MCF 10A (cell line): ENCODE measurements at regions of chr1 and their contacts with region 1.

Region 1: DNA sequence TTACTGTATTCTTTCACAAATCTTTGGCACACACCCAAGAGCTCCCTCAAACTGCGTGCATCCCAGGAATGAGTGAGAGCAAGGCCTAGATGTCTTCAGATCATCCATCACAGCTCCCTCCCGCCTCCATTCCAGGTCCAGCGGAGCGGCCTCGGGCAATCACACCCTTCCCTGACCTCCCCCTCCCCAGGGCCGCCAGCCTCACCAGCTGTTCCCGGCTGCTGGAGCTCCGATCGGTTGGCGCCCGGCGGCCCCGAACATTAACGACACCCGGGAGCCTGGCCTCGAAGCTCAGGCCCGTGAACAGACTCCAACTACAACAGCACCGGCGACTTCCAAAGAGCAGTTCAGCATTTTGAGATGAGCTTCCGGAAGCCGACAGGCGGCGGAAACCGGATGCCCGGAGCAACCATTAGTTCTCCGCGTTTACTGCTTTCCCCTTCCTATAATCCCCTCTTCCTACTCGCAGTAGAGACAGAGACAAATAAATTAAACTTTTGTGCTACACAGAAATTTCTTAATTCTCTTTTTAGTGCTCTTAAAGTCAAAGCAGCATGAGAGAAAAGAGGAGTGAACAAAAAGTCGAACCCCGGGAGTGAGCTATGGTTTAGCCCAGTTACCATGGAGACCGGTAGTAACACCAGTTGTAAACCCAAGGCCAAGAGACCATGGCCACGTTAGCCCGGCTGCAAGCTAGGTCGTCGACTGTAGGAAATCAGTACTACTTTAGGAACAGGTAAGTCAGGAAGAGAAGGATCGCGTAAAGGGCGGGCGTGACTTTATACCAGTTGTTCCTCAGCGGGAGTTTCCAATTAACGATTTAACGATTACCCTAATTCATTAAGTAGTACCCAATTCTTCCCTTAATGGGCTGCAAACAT is at the starts of genes GPATCH2 and SPATA17:
- DNase-seq: peak; percentile 97
- H3K4me3 Mint-ChIP-seq: peak within 1 kb of the TSS; percentile 79
- H3K27ac Mint-ChIP-seq: peak within 1 kb of the TSS; percentile 100
- H3K4me1 Mint-ChIP-seq: peaks cover 30% of the 10 kb centered on the region
- H3K27me3 Mint-ChIP-seq: no peaks in the 10 kb centered on the region
- CTCF ChIP-seq: peak; percentile 29
- total RNA-seq, gene GPATCH2: 34.5 and 44.4 TPM in 2 replicates
- total RNA-seq, gene SPATA17: 4.5 and 11.0 TPM in 2 replicates

Region 2: GRCh38 chr1:217528271-217528670 is 102.7 kb before region 1 on chr1:
- CTCF ChIA-PET with region 1: interaction called, 3 read pairs
- POLR2A ChIA-PET with region 1: no interaction called
- intact Hi-C with region 1: loop called (anchors 5 kb)
- DNase-seq: no peak
- H3K4me3 Mint-ChIP-seq: no peak overlapping the region
- H3K27ac Mint-ChIP-seq: peak overlapping the region; percentile 8
- H3K4me1 Mint-ChIP-seq: peaks cover 30% of the 10 kb centered on the region
- H3K27me3 Mint-ChIP-seq: no peaks in the 10 kb centered on the region
- CTCF ChIP-seq: no peak

Region 3: DNA sequence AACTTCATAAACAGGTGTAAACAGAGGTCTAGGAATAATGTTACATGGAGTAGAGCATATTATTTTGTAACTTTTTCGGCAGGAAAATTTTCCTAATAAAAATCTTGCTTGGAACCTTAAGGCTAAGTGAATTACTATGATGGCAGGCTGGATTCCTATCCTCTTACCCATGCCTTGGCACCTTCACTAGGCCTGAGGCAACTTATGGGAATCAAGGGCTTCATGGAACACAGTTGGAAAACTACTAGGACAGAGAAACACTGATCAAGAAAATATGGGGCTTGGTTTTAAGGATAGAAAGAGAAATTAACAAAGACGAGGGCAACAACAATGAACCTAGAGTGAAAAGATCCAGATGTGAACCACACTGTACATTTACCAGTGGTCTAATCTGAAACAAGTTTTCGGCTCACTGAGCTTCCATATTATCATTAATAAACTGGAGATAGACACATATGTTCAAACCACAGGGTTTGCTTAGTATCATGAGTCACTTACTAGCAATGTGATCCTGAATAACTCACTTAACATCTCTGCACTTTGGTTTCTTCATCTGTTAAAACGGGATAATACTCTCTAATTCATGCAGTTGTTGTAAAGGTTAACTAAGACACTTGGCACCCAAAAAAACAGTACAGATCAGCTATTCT is 68.6 kb before region 1 on chr1:
- CTCF ChIA-PET with region 1: interaction called, 3 read pairs
- POLR2A ChIA-PET with region 1: interaction called, 9 read pairs
- intact Hi-C with region 1: loop called (anchors 5 kb)
- DNase-seq: peak; percentile 91
- H3K4me3 Mint-ChIP-seq: peak overlapping the region; percentile 60
- H3K27ac Mint-ChIP-seq: peak overlapping the region; percentile 91
- H3K4me1 Mint-ChIP-seq: peaks cover 23% of the 10 kb centered on the region
- H3K27me3 Mint-ChIP-seq: no peaks in the 10 kb centered on the region
- CTCF ChIP-seq: no peak

Region 4: GRCh38 chr1:217614200-217614712 is 16.7 kb before region 1 on chr1:
- CTCF ChIA-PET with region 1: interaction called, 21 read pairs
- POLR2A ChIA-PET with region 1: interaction called, 29 read pairs
- intact Hi-C with region 1: no loop called
- DNase-seq: no peak
- H3K4me3 Mint-ChIP-seq: no peak overlapping the region
- H3K27ac Mint-ChIP-seq: no peak overlapping the region
- H3K4me1 Mint-ChIP-seq: no peaks in the 10 kb centered on the region
- H3K27me3 Mint-ChIP-seq: no peaks in the 10 kb centered on the region
- CTCF ChIP-seq: no peak

Region 5: DNA sequence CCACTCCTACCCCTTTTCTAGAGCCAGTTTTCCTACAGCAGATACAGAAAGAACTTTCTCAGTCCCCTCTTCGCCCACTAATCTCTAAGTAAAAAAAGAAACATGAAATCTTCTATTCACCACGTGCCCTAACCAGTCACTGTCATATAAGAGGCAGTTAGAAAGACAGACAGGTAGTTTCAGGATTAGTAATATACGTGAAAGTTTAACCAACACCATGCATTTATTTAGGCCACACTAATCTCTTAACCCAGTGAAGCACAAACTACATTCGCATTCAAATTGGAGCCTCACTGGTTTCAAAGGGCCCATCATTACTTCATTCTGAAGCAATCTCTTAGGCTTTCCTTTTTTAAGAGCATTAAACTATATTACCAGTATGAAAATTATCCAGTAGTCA is 10.1 kb before region 1 on chr1:
- CTCF ChIA-PET with region 1: interaction called, 21 read pairs
- POLR2A ChIA-PET with region 1: interaction called, 29 read pairs
- intact Hi-C with region 1: no loop called
- DNase-seq: no peak
- H3K4me3 Mint-ChIP-seq: no peak overlapping the region
- H3K27ac Mint-ChIP-seq: no peak overlapping the region
- H3K4me1 Mint-ChIP-seq: no peaks in the 10 kb centered on the region
- H3K27me3 Mint-ChIP-seq: no peaks in the 10 kb centered on the region
- CTCF ChIP-seq: no peak

Region 6: GRCh38 chr1:217734973-217735372 is 104.0 kb after region 1 on chr1:
- CTCF ChIA-PET with region 1: no interaction called
- POLR2A ChIA-PET with region 1: no interaction called
- intact Hi-C with region 1: loop called (anchors 1 kb)
- DNase-seq: peak; percentile 68
- H3K4me3 Mint-ChIP-seq: no peak overlapping the region
- H3K27ac Mint-ChIP-seq: no peak overlapping the region
- H3K4me1 Mint-ChIP-seq: peaks cover 27% of the 10 kb centered on the region
- H3K27me3 Mint-ChIP-seq: no peaks in the 10 kb centered on the region
- CTCF ChIP-seq: no peak